Naive thymus-derived CD4-positive, alpha-beta T cell (primary cell): ENCODE measurements at regions of chr5 and their contacts with region 1.

Region 1: DNA sequence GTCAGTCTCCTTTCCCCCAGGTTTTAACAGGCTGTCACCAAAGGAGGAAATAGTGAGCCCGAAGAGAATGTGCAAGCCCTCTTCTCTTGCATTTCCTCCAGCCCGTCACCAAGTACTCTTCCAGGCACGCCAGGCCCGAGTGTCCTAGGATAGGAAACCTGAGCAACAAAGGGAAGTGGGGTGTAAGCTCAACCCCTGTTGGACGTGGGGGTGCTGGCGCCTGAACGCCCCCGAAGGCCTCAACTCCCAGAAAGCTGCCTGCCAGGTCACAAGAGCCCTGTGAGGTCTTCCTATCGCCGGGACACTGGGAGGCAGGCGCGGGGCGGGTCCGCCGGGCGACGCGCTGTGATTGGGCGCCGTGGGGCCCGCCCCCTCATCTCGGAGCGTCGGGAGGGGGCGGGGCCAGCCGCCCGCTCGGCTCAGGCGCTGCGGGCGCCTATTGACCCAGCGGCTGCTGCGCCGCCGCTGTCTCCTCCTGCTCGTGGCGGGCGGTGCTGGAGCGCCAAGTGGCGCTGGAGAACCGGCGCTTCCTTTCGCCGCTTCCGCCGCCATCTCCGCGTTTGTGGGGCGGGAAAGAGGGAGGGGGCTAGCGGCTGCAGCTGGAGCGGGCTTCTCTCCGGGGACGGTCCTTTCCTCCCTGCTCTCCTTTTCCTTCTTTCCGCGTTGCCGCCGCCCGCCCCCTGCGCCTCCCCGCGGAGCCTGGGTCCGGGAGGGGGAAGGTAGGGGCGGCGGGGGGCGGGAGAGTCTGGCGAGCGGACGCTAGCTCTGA is 572 bp upstream of the MAN2A1 start:
- DNase-seq: peak; percentile 69 to 84 (median 78)
- ATAC-seq: peak; percentile 88
- H3K4me3 ChIP-seq: peak overlapping the region; percentile 94
- H3K4me3 Mint-ChIP-seq: peak overlapping the region; percentile 83 to 96 (median 92)
- H3K27ac ChIP-seq: peak overlapping the region; percentile 93
- H3K27ac Mint-ChIP-seq: peak overlapping the region; percentile 45 to 94 (median 90)
- H3K4me1 ChIP-seq: peaks cover 9 to 13% of the 10 kb centered on the region in 2 donors
- H3K4me1 Mint-ChIP-seq: peaks cover 14 to 36% (median 33%) of the 10 kb centered on the region in 7 donors
- H3K27me3 ChIP-seq: no peaks in the 10 kb centered on the region
- H3K27me3 Mint-ChIP-seq: peaks cover 0 to 3% (median 0%) of the 10 kb centered on the region in 5 donors

Region 2: GRCh38 chr5:108381954-108382783 is 1307.0 kb before region 1 on chr5 and contains the start of gene FBXL17:
- CTCF ChIA-PET with region 1: no interaction called
- POLR2A ChIA-PET with region 1: interaction called, 4 read pairs
- intact Hi-C with region 1: loop called (anchors 1 kb)
- DNase-seq: peak; percentile 86 to 95 (median 92)
- ATAC-seq: peak; percentile 89
- H3K4me3 ChIP-seq: peak within 1 kb of the TSS; percentile 90
- H3K4me3 Mint-ChIP-seq: peak within 1 kb of the TSS; percentile 80 to 99 (median 91)
- H3K27ac ChIP-seq: peak within 1 kb of the TSS; percentile 88
- H3K27ac Mint-ChIP-seq: peak within 1 kb of the TSS; percentile 90 to 99 (median 97)
- H3K4me1 ChIP-seq: peaks cover 8 to 17% of the 10 kb centered on the region in 2 donors
- H3K4me1 Mint-ChIP-seq: peaks cover 19 to 52% (median 44%) of the 10 kb centered on the region in 7 donors
- H3K27me3 ChIP-seq: no peaks in the 10 kb centered on the region
- H3K27me3 Mint-ChIP-seq: no peaks in the 10 kb centered on the region
- total RNA-seq, gene FBXL17: 14.2 to 28.4 (median 21.7) TPM

Region 3: GRCh38 chr5:109589986-109590385 is 99.2 kb before region 1 on chr5:
- CTCF ChIA-PET with region 1: no interaction called
- POLR2A ChIA-PET with region 1: no interaction called
- intact Hi-C with region 1: loop called in 1 of 2 experiments (anchors 2 kb)
- DNase-seq: peak in 5 of 9 donors; percentile 7 to 39 (median 12)
- ATAC-seq: peak; percentile 54
- H3K4me3 ChIP-seq: no peak overlapping the region
- H3K4me3 Mint-ChIP-seq: no peak overlapping the region
- H3K27ac ChIP-seq: no peak overlapping the region
- H3K27ac Mint-ChIP-seq: peak overlapping the region in 2 of 9 donors; percentile 38 to 47
- H3K4me1 ChIP-seq: no peaks in the 10 kb centered on the region
- H3K4me1 Mint-ChIP-seq: peaks cover 0 to 16% (median 10%) of the 10 kb centered on the region in 7 donors
- H3K27me3 ChIP-seq: no peaks in the 10 kb centered on the region
- H3K27me3 Mint-ChIP-seq: peaks cover 0 to 2% (median 0%) of the 10 kb centered on the region in 5 donors

Region 4: DNA sequence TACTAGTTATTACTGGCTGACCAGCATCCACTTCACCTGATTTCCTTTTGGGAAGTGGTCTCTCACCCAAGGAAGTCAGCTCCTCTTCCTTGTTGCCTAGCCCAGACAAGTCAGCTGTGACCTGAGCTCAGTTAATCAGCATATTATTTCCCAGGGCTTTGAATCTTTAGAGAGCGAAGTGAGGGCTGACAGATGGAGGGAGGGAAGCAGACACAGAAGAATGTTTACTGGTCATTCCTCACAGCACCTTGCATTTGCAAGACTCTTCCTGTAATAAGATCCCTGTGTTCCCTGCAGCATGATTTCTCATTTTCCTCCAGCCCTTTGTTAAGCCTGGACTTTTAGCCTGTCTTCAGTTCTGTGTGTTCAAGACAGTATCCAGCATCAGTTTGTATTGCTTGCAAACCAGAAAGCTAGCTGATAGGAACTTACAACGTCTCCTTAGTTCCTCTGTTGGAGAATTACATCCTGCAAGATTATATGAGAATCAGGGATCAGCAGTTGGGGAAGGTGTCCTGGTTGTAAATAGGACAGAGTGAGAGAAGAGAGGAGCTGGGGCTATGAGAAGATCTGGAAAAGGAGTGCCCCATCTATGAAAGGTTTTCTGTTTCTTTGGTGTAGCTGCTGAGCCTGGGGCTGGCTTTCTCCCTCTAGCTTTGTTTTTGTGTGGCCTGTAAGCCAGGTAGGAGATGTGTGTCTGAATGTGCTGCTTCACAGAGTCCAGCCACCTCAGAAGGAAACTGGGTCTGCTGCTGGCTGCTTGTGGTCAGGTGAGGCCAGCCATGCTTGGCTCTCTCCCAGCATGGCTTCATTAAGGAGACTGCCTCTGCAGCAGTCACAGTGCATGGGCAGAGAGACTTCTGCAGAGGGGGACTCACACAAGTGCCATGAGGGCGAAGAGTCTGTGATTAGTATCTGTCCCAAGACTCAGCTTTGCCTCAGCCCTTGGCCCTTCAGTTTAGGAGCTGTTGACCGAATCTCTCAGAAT is 50.9 kb after region 1 on chr5:
- CTCF ChIA-PET with region 1: interaction called, 3 read pairs
- POLR2A ChIA-PET with region 1: no interaction called
- intact Hi-C with region 1: loop called in 1 of 2 experiments (anchors 5 kb)
- DNase-seq: no peak
- ATAC-seq: peak; percentile 27
- H3K4me3 ChIP-seq: no peak overlapping the region
- H3K4me3 Mint-ChIP-seq: peak overlapping the region in 2 of 10 donors; percentile 20 to 61
- H3K27ac ChIP-seq: no peak overlapping the region
- H3K27ac Mint-ChIP-seq: peak overlapping the region in 7 of 9 donors; percentile 1 to 76 (median 26)
- H3K4me1 ChIP-seq: peaks cover 5 to 9% of the 10 kb centered on the region in 2 donors
- H3K4me1 Mint-ChIP-seq: peaks cover 22 to 90% (median 69%) of the 10 kb centered on the region in 7 donors
- H3K27me3 ChIP-seq: no peaks in the 10 kb centered on the region
- H3K27me3 Mint-ChIP-seq: no peaks in the 10 kb centered on the region

Region 5: DNA sequence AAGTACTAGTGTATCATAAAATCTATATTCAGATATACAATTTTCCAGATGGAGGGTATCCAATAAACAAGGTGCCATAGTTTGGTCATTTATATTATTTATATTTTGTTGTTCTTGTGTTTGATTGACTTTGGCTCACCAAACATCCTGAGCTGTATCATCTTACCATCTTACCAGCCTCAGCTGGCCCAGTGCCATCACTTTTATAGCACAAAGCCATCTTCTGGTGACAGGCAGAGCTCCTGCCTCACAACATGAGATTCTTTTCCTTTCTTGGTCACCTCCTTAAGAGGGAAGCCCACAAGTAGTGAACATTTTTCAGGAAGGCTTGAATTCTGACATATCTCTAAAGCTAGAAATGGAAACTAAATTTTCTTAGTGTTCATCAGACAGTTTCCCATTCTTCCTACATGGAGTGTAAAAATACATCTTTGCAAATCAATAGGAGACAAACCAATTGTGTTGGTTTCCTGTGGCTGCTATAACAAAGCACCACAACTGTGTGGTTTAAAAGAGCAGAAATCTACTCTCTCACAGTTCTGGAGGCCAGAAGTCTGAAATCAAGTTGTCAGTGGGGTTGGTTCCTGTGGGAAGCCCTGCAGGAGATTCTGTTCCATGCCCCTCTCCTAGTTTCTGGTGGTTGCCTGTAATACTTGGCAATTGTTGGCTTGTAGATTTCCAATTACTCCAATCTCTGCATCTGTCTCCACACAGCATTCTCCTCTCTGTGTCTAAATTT is 342.4 kb after region 1 on chr5:
- CTCF ChIA-PET with region 1: no interaction called
- POLR2A ChIA-PET with region 1: interaction called, 11 read pairs
- intact Hi-C with region 1: no loop called
- DNase-seq: peak in 7 of 9 donors; percentile 10 to 49 (median 23)
- ATAC-seq: peak; percentile 31
- H3K4me3 ChIP-seq: no peak overlapping the region
- H3K4me3 Mint-ChIP-seq: peak overlapping the region in 2 of 10 donors; percentile 8 to 20
- H3K27ac ChIP-seq: no peak overlapping the region
- H3K27ac Mint-ChIP-seq: peak overlapping the region in 3 of 9 donors; percentile 21 to 78 (median 33)
- H3K4me1 ChIP-seq: peaks cover 8 to 11% of the 10 kb centered on the region in 2 donors
- H3K4me1 Mint-ChIP-seq: peaks cover 5 to 54% (median 37%) of the 10 kb centered on the region in 7 donors
- H3K27me3 ChIP-seq: no peaks in the 10 kb centered on the region
- H3K27me3 Mint-ChIP-seq: no peaks in the 10 kb centered on the region

Region 6: DNA sequence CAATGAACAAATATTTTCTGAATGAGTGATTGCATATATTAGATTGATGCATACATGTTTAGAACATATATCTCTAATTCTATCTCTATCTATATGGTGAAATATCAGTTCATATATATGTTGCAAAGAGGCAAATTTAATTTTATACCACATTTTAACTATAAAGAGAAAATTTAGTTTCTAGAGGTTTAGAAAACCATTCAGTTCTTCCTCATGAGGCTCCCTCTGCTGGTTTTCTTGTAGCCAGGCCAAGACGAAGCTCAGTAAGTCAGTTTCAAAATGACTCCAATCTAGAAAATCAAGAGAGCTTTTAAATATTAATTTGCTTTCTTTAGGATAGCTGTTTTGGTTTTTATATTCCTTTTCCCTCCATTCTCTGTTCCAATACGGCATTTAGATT is 725.2 kb after region 1 on chr5:
- CTCF ChIA-PET with region 1: interaction called, 5 read pairs
- POLR2A ChIA-PET with region 1: no interaction called
- intact Hi-C with region 1: loop called (anchors 1 to 10 kb)
- DNase-seq: peak in 4 of 9 donors; percentile 3 to 27 (median 16)
- ATAC-seq: no peak
- H3K4me3 ChIP-seq: no peak overlapping the region
- H3K4me3 Mint-ChIP-seq: no peak overlapping the region
- H3K27ac ChIP-seq: no peak overlapping the region
- H3K27ac Mint-ChIP-seq: peak overlapping the region in 1 of 9 donors; percentile 27
- H3K4me1 ChIP-seq: no peaks in the 10 kb centered on the region
- H3K4me1 Mint-ChIP-seq: no peaks in the 10 kb centered on the region
- H3K27me3 ChIP-seq: no peaks in the 10 kb centered on the region
- H3K27me3 Mint-ChIP-seq: no peaks in the 10 kb centered on the region

Region 7: GRCh38 chr5:111092062-111092853 is 1403.1 kb after region 1 on chr5 and contains the start of gene WDR36:
- CTCF ChIA-PET with region 1: no interaction called
- POLR2A ChIA-PET with region 1: no interaction called
- intact Hi-C with region 1: loop called (anchors 1 to 2 kb)
- DNase-seq: peak; percentile 80 to 95 (median 87)
- ATAC-seq: peak; percentile 99
- H3K4me3 ChIP-seq: peak within 1 kb of the TSS; percentile 88
- H3K4me3 Mint-ChIP-seq: peak within 1 kb of the TSS; percentile 91 to 99 (median 98)
- H3K27ac ChIP-seq: peak within 1 kb of the TSS; percentile 82
- H3K27ac Mint-ChIP-seq: peak within 1 kb of the TSS; percentile 66 to 98 (median 94)
- H3K4me1 ChIP-seq: peaks cover 11 to 20% of the 10 kb centered on the region in 2 donors
- H3K4me1 Mint-ChIP-seq: peaks cover 22 to 49% (median 39%) of the 10 kb centered on the region in 7 donors
- H3K27me3 ChIP-seq: no peaks in the 10 kb centered on the region
- H3K27me3 Mint-ChIP-seq: peaks cover 0 to 12% (median 5%) of the 10 kb centered on the region in 5 donors
- total RNA-seq, gene WDR36: 24.8 to 37.4 (median 29.7) TPM